Activated CD8-positive, alpha-beta T cell treated with anti-CD3 and anti-CD28 coated beads, Interleukin-2, amount 10 ng/mL, durations not matched to agents 7 days and 5 days (primary cell): ENCODE measurements at regions of chr17 and their contacts with region 1.

Region 1: GRCh38 chr17:32783602-32784001 is 93.3 kb downstream of the MYO1D start:
- DNase-seq: no peak
- ATAC-seq: no peak
- H3K4me3 Mint-ChIP-seq: no peak overlapping the region
- H3K27ac Mint-ChIP-seq: no peak overlapping the region
- H3K4me1 Mint-ChIP-seq: no peaks in the 10 kb centered on the region
- H3K27me3 Mint-ChIP-seq: peaks cover 10% of the 10 kb centered on the region

Region 2: DNA sequence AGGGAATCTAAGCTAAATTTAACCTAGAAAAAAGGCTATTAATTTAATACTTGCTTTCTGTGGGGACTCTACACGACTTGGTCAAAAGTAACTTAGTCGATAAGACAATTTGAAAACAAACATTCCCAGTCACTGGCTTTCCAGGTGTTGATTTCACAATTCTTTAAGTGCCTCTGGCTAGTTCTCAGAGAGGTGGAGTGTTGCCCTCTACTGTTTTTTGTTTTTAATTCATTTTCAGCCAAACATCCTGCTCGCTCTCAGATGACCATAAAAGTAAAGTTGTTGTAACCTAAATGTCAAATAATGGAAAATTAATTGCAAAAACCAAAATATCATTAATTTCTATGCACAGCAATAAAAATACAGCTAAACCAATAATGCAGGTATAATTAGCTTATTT is 13.8 kb before region 1 on chr17:
- CTCF ChIA-PET with region 1: interaction called, 20 read pairs
- POLR2A ChIA-PET with region 1: interaction called, 4 read pairs
- DNase-seq: no peak
- ATAC-seq: no peak
- H3K4me3 Mint-ChIP-seq: no peak overlapping the region
- H3K27ac Mint-ChIP-seq: no peak overlapping the region
- H3K4me1 Mint-ChIP-seq: no peaks in the 10 kb centered on the region
- H3K27me3 Mint-ChIP-seq: no peaks in the 10 kb centered on the region

Region 3: DNA sequence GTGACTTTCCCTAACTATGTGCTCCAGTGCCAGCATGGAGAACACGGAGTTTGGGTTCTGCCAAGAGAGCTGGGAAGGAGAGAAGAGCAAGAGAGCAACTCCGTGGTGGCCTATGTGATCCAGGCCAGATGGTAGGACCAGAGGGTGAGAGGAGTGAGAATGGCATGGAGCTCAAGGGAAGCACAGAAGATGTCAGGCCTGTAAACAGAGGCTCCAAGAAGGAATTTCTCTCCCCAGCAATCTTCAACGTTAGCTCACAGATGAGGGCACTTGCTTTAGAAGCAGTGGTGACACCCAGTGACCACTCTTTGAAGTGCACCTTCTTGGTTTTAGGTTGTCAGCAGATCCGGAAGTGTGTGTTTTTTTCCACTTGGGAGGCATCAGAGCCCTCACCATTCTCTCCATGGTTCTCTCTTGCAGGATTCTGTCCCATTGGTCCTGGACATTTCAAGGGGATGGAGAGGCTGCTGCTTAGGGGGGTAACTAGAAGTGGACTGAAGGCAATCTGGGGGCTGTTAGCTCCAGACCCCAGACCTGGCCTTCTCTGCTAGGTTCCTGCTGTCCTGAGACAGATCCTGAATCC is 126.3 kb after region 1 on chr17:
- CTCF ChIA-PET with region 1: interaction called, 30 read pairs
- POLR2A ChIA-PET with region 1: no interaction called
- DNase-seq: peak; percentile 75
- ATAC-seq: peak; percentile 87
- H3K4me3 Mint-ChIP-seq: no peak overlapping the region
- H3K27ac Mint-ChIP-seq: no peak overlapping the region
- H3K4me1 Mint-ChIP-seq: peaks cover 12% of the 10 kb centered on the region
- H3K27me3 Mint-ChIP-seq: peaks cover 38% of the 10 kb centered on the region

Region 4: GRCh38 chr17:32936894-32937500 is 153.4 kb after region 1 on chr17:
- CTCF ChIA-PET with region 1: interaction called, 58 read pairs
- POLR2A ChIA-PET with region 1: no interaction called
- DNase-seq: peak; percentile 70
- ATAC-seq: peak; percentile 80
- H3K4me3 Mint-ChIP-seq: no peak overlapping the region
- H3K27ac Mint-ChIP-seq: no peak overlapping the region
- H3K4me1 Mint-ChIP-seq: peaks cover 3% of the 10 kb centered on the region
- H3K27me3 Mint-ChIP-seq: peaks cover 12% of the 10 kb centered on the region

Region 5: DNA sequence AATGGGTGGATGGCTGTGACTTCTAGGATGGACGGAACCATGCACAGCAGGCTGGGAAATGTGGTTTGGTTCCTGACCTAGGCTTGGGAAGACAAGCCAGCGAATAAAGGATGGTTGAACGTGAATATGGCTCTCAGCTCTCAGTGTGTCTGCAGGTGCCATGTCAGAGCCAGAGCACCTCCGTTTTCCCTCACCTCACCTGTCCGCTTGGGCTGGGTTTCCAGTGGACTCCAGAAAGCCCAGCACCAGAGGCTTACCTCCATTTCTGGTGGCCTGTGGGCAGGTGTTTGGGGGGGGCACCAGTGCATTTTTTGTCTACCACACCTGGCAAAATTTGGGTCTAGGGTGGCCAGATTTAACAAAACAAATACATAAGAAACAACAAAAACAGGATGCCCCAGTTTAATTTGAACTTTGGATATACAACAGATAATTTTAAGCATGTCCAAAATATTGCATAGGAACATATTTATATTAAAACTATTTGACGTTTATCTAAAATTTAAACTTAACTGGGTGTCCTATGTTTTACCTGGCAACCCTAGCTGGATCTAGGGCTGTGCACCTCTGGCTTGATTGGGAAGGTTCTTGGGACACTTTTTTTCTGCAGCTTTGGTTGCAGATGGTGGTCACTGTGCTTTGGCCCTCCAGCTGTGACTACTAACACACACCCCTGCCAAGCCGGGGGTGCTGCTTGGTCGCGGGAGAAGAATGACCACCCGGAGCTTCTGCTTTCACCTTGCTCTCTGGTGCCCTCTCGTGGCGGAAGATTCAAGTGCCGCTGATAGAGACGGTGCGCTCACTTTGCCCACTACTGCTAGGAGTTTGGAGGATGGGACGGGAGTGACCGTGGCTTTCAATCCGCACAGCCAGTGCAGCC is 214.4 kb after region 1 on chr17:
- CTCF ChIA-PET with region 1: interaction called, 15 read pairs
- POLR2A ChIA-PET with region 1: no interaction called
- DNase-seq: peak; percentile 81
- ATAC-seq: peak; percentile 81
- H3K4me3 Mint-ChIP-seq: no peak overlapping the region
- H3K27ac Mint-ChIP-seq: no peak overlapping the region
- H3K4me1 Mint-ChIP-seq: peaks cover 4% of the 10 kb centered on the region
- H3K27me3 Mint-ChIP-seq: peaks cover 17% of the 10 kb centered on the region

Region 6: GRCh38 chr17:33310296-33310695 is 526.7 kb after region 1 on chr17:
- CTCF ChIA-PET with region 1: no interaction called
- POLR2A ChIA-PET with region 1: no interaction called
- DNase-seq: no peak
- ATAC-seq: no peak
- H3K4me3 Mint-ChIP-seq: no peak overlapping the region
- H3K27ac Mint-ChIP-seq: no peak overlapping the region
- H3K4me1 Mint-ChIP-seq: no peaks in the 10 kb centered on the region
- H3K27me3 Mint-ChIP-seq: peaks cover 12% of the 10 kb centered on the region